Esophagus squamous epithelium (tissue), 5 donors: ENCODE measurements at regions of chr18 and their contacts with region 1.

Region 1: GRCh38 chr18:9102508-9103375 is at the start of gene NDUFV2:
- DNase-seq: peak; percentile 85
- H3K4me3 ChIP-seq: peak within 1 kb of the TSS; percentile 44 to 87 (median 70)
- H3K27ac ChIP-seq: peak within 1 kb of the TSS; percentile 91 to 97 (median 92)
- H3K4me1 ChIP-seq: peaks cover 36 to 61% (median 37%) of the 10 kb centered on the region in 3 donors
- H3K27me3 ChIP-seq: no peaks in the 10 kb centered on the region
- CTCF ChIP-seq: peak in 2 of 6 experiments; percentile 12 to 16
- POLR2A ChIP-seq: peak in 2 of 4 donors; percentile 70 to 98
- total RNA-seq, gene NDUFV2: 96.5 to 150 (median 110) TPM

Region 2: DNA sequence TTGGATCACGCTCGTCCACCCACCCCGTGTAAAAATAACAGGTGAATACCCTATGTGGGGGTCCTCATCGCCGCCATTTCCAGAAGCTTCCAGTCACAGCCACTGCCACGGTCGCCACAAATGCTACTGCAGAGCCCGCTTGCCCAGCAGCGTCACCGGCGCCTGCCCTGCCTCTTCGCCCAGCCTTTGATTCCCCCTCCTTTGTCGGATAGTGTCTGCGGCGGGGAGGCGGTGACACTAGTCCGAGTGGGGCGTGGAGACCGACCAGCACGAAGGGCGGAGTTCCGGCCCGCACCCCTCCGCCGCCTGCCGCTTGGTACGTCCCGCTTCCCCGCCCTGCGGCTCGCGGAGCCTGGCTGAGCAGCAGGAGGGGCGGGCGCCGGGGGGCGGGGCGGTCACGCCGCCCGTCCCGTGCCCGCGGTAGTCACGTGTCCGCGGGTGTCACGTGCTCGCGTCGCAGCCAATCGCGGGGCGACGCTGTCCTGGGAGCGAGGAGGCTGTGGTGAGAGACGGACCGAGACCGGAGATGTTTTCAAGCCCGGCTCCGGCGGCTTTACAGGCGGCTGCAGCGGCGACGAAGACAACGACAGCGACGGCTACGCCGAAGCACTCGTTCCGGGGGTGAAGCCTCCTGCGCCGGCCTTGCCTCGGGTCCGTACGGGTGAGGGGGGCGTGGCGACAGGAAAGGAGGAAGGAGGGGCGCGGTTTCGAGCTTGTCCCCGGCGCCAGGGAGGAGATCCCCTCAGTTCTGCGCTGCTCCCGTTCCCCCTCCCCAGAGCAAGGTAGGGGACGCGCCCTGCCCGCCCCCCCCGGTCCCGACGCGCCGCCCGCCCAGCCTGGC is 33.8 kb after region 1 on chr18 and contains the start of gene ANKRD12:
- intact Hi-C with region 1: loop called (anchors 2 kb)
- DNase-seq: peak; percentile 93
- H3K4me3 ChIP-seq: peak within 1 kb of the TSS; percentile 71 to 82 (median 80)
- H3K27ac ChIP-seq: peak within 1 kb of the TSS; percentile 97 to 100 (median 99)
- H3K4me1 ChIP-seq: peaks cover 29 to 73% (median 42%) of the 10 kb centered on the region in 3 donors
- H3K27me3 ChIP-seq: no peaks in the 10 kb centered on the region
- CTCF ChIP-seq: peak in 2 of 6 experiments; percentile 1 to 8
- POLR2A ChIP-seq: peak in 3 of 4 donors; percentile 49 to 89 (median 81)
- total RNA-seq, gene ANKRD12: 13.0 to 60.3 (median 23.4) TPM